KBM-7 (cell line): ENCODE measurements at regions of chr20 and their contacts with region 1.

Region 1: GRCh38 chr20:59751056-59751688 is 146.8 kb downstream of the PHACTR3 start:
- DNase-seq: peak; percentile 73

Region 2: GRCh38 chr20:59258221-59258621 is 493.0 kb before region 1 on chr20:
- in situ Hi-C with region 1: no loop called
- DNase-seq: peak; percentile 38

Region 3: DNA sequence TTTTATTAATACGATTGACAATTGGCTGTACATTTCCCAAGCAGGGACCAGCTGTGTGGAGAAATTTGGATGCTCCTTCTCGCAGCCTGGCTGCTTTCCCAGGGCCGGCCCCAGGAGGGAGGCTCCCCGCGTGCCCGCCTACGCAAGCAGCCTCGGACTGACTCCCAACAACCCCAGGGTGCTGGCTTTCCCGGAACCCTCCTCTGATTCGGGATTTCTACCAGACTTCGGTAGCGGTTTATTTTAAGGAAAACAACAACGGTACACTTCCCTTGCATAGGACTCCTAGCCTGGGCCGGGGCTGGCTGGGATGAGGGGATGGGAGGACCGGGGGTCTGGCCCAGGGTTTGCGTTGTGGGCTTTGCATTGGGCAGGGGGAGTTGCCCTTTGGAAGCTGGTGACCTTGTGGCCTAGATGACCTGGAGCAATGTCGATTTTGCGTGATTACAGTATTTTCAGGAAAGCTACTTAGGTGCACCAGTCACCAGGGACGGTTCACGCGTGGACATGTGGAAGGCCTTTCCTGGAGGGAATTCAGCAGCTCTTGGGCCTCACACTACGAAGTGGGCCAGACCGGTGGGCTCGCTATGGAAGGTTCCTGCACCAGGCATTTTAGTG is 167.6 kb before region 1 on chr20:
- in situ Hi-C with region 1: loop called (anchors 10 kb)
- DNase-seq: no peak